Activated CD4-positive, alpha-beta memory T cell treated with anti-CD3 and anti-CD28 coated beads for 36 hours (primary cell): ENCODE measurements at regions of chr21 and their contacts with region 1.

Region 1: DNA sequence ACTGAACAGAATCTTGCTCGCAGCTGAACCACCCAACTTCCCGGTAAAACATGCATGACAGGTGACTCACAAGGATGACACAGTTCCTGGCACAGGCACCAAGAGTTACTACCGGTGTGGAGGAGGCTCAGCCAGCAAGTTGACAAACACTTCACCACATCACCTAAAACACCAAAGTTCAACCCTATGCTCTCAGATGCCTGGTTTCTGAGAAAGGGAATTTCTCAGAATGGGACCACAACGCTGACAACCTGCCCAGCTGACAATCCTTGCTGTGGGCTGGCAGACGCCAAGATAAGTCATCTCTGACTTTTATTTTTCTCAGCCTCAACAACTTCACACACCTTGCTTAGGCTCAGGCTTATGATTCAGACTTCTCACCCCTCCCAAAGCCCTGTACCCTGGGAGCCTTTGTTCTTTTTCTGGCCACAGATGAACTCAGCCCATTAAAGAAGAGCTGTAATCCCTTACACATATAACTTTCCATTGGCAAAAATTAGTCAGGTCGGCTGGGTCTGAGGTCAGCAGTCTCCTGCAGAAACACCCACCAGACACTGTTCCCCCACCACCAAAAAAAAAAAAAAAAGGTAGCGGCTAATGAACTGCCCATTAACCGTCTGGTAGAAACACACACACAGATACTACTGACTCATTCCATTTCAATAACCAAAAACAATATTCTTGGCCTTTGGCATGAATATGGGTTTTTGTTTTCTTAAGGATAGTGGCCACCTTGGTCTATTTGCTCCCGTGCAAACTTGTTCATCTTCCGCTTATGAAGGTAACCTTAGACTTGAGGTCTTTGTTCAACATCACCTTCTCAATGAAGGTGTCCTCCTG is 10.8 kb upstream of the TIAM1 start:
- DNase-seq: peak; percentile 90
- H3K4me3 Mint-ChIP-seq: peak overlapping the region; percentile 33
- H3K27ac Mint-ChIP-seq: peak overlapping the region; percentile 91
- H3K4me1 Mint-ChIP-seq: peaks cover 49% of the 10 kb centered on the region
- H3K27me3 Mint-ChIP-seq: no peaks in the 10 kb centered on the region

Region 2: DNA sequence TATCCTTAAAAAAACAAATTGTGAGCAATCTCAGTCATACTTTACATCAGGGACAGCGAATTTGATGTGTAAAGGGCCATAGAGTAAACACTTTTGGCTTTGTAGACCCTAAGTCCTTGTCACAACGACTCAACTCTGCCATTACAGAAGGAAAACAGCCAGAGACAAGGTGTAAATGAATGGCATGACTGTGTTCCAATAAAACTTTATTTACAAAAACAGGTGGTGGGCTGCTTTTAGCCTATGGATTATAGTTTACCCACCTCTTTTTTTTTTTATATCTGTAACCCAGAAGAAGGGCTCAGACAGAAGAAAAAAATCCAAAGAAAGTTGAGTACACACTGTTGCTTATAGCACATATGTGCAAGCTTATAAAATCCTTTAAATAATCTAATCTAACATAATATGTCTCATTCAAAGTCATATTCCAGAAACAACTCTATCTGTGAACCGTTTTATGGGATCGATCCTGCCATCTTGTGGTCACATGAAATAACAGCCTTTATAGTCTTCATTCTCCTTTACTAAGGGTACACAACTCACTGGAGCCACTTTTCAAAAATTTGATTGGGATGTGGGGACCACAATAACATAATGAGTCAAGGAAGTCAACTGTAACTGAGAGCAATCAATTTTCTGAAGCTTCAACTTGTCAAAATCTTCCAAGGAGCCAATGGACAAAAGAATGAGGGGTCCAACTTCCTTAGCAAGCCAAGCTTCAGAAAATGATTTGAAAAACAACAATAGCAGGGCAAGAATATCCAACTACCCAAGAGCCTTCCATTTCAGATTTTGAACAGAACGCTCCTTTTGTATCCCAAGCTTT is 174.4 kb before region 1 on chr21:
- CTCF ChIA-PET with region 1: interaction called, 5 read pairs
- POLR2A ChIA-PET with region 1: interaction called, 4 read pairs
- intact Hi-C with region 1: loop called (anchors 1 kb)
- DNase-seq: no peak
- H3K4me3 Mint-ChIP-seq: peak overlapping the region; percentile 74
- H3K27ac Mint-ChIP-seq: peak overlapping the region; percentile 100
- H3K4me1 Mint-ChIP-seq: peaks cover 74% of the 10 kb centered on the region
- H3K27me3 Mint-ChIP-seq: no peaks in the 10 kb centered on the region

Region 3: GRCh38 chr21:31326522-31327242 is 28.1 kb before region 1 on chr21:
- CTCF ChIA-PET with region 1: no interaction called
- POLR2A ChIA-PET with region 1: interaction called, 21 read pairs
- intact Hi-C with region 1: loop called (anchors 1 kb)
- DNase-seq: peak; percentile 81
- H3K4me3 Mint-ChIP-seq: peak overlapping the region; percentile 47
- H3K27ac Mint-ChIP-seq: peak overlapping the region; percentile 88
- H3K4me1 Mint-ChIP-seq: peaks cover 30% of the 10 kb centered on the region
- H3K27me3 Mint-ChIP-seq: no peaks in the 10 kb centered on the region

Region 4: GRCh38 chr21:31426235-31426797 is 71.5 kb after region 1 on chr21:
- CTCF ChIA-PET with region 1: no interaction called
- POLR2A ChIA-PET with region 1: interaction called, 4 read pairs
- intact Hi-C with region 1: loop called (anchors 2 kb)
- DNase-seq: no peak
- H3K4me3 Mint-ChIP-seq: no peak overlapping the region
- H3K27ac Mint-ChIP-seq: peak overlapping the region; percentile 25
- H3K4me1 Mint-ChIP-seq: peaks cover 8% of the 10 kb centered on the region
- H3K27me3 Mint-ChIP-seq: no peaks in the 10 kb centered on the region

Region 5: DNA sequence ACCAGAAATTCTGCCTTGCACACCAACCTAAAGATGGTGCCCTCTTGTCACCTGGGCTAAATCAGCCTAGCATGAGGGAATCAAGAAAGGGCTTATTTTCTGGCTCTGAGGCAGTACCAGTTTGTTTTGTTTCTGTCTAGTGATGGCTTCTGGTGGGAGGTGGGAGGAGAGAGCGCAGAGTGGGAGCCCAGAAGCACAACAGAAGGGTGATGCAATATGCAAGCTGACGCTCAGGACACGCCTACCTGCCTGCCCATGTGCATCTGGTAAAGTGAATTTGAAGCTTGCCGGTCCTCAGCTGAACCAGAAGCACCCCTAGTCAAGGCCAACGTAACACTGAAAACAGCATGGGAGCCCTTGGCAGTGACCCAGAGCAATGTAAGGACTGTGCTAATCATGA is 127.6 kb after region 1 on chr21:
- CTCF ChIA-PET with region 1: no interaction called
- POLR2A ChIA-PET with region 1: no interaction called
- intact Hi-C with region 1: no loop called
- DNase-seq: no peak
- H3K4me3 Mint-ChIP-seq: no peak overlapping the region
- H3K27ac Mint-ChIP-seq: no peak overlapping the region
- H3K4me1 Mint-ChIP-seq: no peaks in the 10 kb centered on the region
- H3K27me3 Mint-ChIP-seq: no peaks in the 10 kb centered on the region

Region 6: DNA sequence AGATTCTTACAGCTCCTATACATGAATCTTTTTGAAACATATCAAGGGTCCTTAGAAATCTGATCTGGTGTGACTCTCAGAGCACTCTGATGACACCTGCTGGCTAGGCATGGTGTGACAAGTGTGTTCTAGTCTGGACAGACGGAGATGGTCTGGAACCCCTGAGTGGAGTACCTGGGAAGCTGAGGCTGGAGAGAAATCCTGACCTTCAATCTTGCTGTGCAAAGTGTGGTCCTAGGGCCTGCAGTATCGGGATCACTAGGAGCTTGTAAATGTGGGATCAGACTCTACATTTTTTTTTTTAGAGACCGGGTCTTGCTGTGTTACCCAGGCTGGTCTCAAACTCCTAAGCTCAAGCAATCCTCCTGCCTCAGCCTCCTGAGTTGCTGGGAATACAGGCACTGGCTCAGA is 226.0 kb after region 1 on chr21:
- CTCF ChIA-PET with region 1: interaction called, 12 read pairs
- POLR2A ChIA-PET with region 1: no interaction called
- intact Hi-C with region 1: no loop called
- DNase-seq: peak; percentile 84
- H3K4me3 Mint-ChIP-seq: no peak overlapping the region
- H3K27ac Mint-ChIP-seq: no peak overlapping the region
- H3K4me1 Mint-ChIP-seq: peaks cover 4% of the 10 kb centered on the region
- H3K27me3 Mint-ChIP-seq: peaks cover 3% of the 10 kb centered on the region

Region 7: GRCh38 chr21:31837618-31838390 is 483.0 kb after region 1 on chr21:
- CTCF ChIA-PET with region 1: no interaction called
- POLR2A ChIA-PET with region 1: no interaction called
- intact Hi-C with region 1: no loop called
- DNase-seq: no peak
- H3K4me3 Mint-ChIP-seq: no peak overlapping the region
- H3K27ac Mint-ChIP-seq: no peak overlapping the region
- H3K4me1 Mint-ChIP-seq: no peaks in the 10 kb centered on the region
- H3K27me3 Mint-ChIP-seq: peaks cover 5% of the 10 kb centered on the region